ENCODE measurements at regions of chr6 and their contacts with region 1.

Region 1: GRCh38 chr6:104525677-104526312 is 333.9 kb downstream of the HACE1 start:
- DNase-seq: peak; percentile 71
- CTCF ChIP-seq: peak; percentile 84

Region 2: GRCh38 chr6:104486035-104486434 is 39.8 kb before region 1 on chr6:
- CTCF ChIA-PET with region 1: no interaction called
- POLR2A ChIA-PET with region 1: no interaction called
- DNase-seq: no peak
- CTCF ChIP-seq: no peak

Region 3: DNA sequence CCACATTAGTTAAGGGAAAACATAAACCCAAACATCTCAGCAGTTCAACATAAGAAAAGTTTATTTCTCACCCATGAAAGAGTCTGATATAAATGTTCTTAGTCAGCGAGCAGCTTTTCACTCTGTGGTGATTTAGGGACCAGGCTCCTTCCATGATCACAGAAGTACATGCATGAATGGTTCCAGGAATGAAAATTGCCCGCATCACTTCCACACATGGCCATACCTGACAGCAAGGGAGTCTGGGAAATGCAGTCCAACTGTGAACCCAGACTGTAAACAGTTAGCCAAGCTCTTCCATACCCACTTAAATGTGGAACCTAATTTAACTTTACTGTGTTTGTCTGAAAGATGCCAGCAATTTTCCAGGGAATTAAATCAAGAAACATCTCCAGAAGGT is 20.0 kb before region 1 on chr6:
- CTCF ChIA-PET with region 1: interaction called, 12 read pairs
- POLR2A ChIA-PET with region 1: no interaction called
- DNase-seq: no peak
- CTCF ChIP-seq: no peak

Region 4: GRCh38 chr6:104537180-104537579 is 11.4 kb after region 1 on chr6:
- CTCF ChIA-PET with region 1: interaction called, 34 read pairs
- POLR2A ChIA-PET with region 1: no interaction called
- DNase-seq: no peak
- CTCF ChIP-seq: no peak

Measured in GM10248 (cell line).